ENCODE measurements at regions of chr14 and their contacts with region 1.

Region 1: GRCh38 chr14:54773171-54773975 is 129.3 kb downstream of the GCH1 start:
- DNase-seq: peak; percentile 91
- H3K4me3 ChIP-seq: peak overlapping the region in 1 of 2 experiments; percentile 34; a peak in 1 of 4 replicates
- H3K27ac ChIP-seq: peak overlapping the region; percentile 91 to 97
- H3K4me1 ChIP-seq: peaks cover 17 to 50% of the 10 kb centered on the region in 2 experiments
- H3K27me3 ChIP-seq: no peaks in the 10 kb centered on the region
- CTCF ChIP-seq: peak; percentile 73
- EP300 ChIP-seq: peak; percentile 28 to 93; a peak in 3 of 4 replicates
- RAD21 ChIP-seq: peak; percentile 83

Region 2: DNA sequence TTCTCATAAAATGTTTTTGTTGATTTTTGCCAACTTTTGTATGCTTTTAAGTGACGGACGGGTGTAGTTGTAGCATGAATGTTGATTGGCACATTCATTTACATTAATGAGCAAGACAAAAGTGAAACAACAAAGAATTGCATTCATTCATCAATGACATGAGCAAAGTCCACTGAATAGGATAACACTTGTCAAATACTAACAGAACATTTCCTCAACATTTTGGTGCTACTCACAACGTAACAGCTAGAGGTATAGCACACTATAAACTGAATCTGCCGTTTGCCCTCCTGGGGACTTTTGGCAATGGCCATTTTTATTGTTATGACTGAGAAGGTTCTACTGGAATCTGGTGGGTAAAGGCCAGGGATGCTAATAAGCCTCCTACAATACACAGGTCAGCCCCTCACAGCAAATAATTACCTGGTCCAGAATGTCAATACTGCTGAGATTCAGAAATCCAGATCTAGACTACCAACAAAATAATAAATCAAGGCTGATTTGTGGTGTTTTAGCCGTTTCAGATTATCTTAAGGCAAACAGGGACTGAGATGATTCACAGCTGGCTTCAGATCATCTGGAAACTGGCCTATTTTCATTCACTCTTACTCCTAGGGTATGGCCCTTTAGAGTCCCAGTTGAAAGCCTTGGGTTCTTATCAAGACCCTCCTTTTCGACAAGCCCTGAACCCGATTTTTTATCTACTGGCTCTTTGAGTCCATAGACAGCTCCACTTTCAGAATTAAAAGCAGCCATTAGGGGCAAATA is 399.1 kb before region 1 on chr14:
- CTCF ChIA-PET with region 1: no interaction called
- POLR2A ChIA-PET with region 1: no interaction called
- DNase-seq: no peak
- H3K4me3 ChIP-seq: no peak overlapping the region
- H3K27ac ChIP-seq: no peak overlapping the region
- H3K4me1 ChIP-seq: peaks cover 0 to 4% of the 10 kb centered on the region in 2 experiments; a peak in 1 of 4 replicates
- H3K27me3 ChIP-seq: no peaks in the 10 kb centered on the region; the same call in 1 of the 2 replicates
- CTCF ChIP-seq: no peak
- EP300 ChIP-seq: no peak
- RAD21 ChIP-seq: no peak

Region 3: DNA sequence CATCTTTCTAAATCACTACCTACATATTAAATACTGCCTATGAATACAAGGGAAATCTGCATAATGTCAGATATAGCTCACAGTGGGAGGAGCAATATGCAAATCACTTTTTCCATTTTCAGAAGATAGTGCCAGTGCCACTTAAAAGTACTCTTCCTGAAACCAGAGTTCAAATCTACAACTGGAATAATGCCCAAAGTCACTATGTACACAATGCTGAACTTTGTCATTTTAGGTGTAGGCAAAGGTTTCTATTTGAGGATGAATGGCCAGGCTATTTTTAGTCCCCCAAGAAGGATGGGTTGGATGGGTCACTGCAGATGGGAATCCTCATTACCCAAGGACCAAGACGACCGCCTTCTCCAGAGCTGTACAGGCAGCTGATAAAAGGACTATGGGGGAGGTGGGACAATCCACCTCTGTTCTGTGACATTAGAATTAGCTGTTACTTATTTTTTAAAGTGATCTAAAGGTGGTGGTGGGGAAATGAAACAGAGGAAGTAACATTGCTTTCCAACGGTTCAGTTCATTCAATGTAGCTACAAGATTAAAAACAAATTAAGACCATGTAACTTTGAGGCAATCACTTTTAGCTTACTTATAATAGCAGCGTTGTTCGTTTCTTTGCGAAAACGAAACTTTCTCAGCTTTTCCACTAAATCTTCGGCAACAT is 290.2 kb before region 1 on chr14:
- CTCF ChIA-PET with region 1: interaction called, 12 read pairs
- POLR2A ChIA-PET with region 1: no interaction called
- DNase-seq: no peak
- H3K4me3 ChIP-seq: no peak overlapping the region
- H3K27ac ChIP-seq: no peak overlapping the region; a peak in 1 of 4 replicates
- H3K4me1 ChIP-seq: peaks cover 5 to 32% of the 10 kb centered on the region in 2 experiments; a peak in 3 of 4 replicates
- H3K27me3 ChIP-seq: no peaks in the 10 kb centered on the region
- CTCF ChIP-seq: no peak
- EP300 ChIP-seq: no peak
- RAD21 ChIP-seq: no peak

Region 4: DNA sequence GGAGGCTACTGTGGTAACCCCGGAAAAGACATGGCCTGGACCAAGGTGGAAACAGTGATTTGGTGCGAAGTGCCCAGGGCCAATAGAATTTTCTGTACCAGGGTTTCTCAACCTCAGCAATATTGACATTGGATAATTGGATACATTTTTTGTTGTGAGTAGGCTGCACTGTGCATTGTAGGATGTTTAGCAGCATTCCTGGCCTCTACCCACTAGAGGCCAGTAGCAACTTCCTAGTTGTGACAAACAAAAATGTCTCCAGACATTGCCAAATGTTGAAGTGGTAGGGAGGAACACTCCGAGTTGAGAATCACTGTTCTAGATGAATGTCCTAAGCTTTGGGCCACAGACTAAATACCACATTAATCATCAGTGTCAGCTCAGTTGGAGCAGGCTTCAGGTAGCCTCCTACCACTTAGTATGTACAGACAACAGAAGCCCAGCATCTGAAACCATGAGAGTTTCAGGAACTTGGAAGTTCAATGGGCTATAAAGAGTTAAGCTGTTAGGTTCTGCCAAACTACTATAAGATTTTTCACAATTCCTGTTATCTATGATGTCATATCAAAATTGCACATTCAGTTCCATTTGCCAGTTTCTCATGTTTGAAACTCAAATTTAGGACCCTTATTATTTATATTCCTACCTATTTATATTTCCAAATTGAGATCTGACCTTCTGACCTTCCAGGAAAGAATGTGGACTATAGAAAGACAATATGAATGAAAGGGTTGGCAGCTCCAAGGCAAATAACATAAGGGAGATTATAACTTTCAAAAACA is 269.7 kb before region 1 on chr14:
- CTCF ChIA-PET with region 1: no interaction called
- POLR2A ChIA-PET with region 1: no interaction called
- DNase-seq: no peak
- H3K4me3 ChIP-seq: no peak overlapping the region
- H3K27ac ChIP-seq: no peak overlapping the region
- H3K4me1 ChIP-seq: no peaks in the 10 kb centered on the region; a peak in 1 of 4 replicates
- H3K27me3 ChIP-seq: no peaks in the 10 kb centered on the region
- CTCF ChIP-seq: peak; percentile 55
- EP300 ChIP-seq: no peak
- RAD21 ChIP-seq: peak; percentile 50

Region 5: GRCh38 chr14:54572316-54572715 is 201.1 kb before region 1 on chr14:
- CTCF ChIA-PET with region 1: interaction called, 171 read pairs
- POLR2A ChIA-PET with region 1: no interaction called
- DNase-seq: peak; percentile 34
- H3K4me3 ChIP-seq: 0 out of 4 replicates have a peak overlapping the region, but pooled peaks of 1 of the 2 experiments have one; percentile 17
- H3K27ac ChIP-seq: no peak overlapping the region
- H3K4me1 ChIP-seq: peaks cover 15 to 28% of the 10 kb centered on the region in 2 experiments; a peak in 3 of 4 replicates
- H3K27me3 ChIP-seq: no peaks in the 10 kb centered on the region
- CTCF ChIP-seq: peak; percentile 65
- EP300 ChIP-seq: no peak
- RAD21 ChIP-seq: peak; percentile 54

Region 6: DNA sequence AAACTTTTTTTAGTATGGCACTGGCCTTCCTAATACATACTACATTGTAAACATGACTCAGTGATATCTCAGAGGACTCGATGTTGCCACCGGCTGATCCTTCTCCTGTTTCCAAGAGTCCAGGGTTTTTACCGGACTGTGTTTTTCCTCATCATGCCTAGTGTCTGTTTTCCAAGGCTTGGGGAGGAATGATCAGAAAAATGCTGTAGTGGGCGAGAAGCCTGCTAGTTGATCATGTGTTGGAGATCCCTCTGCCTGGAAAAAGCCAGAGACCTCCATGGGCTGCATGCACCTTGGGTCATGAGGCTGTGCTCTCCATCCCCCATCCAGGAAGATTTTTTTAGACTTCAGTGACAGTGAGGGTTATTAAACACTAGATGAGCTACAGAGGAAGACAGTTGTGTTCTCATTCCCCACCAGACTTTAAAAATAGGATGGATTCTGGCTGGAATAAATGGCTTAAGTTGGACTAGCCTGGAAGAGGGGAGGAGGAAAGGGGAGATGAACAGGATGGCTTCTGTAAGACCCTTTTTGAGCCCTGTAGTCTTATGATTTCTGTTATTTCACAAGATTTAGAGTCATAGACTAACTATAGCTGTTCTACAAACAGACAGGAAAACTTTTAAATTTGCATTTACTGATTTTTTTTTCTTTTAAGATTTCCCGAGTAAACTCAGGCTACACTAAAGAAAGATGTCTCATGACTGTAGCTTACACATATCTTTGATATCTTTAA is 60.7 kb before region 1 on chr14:
- CTCF ChIA-PET with region 1: interaction called, 10 read pairs
- POLR2A ChIA-PET with region 1: no interaction called
- DNase-seq: no peak
- H3K4me3 ChIP-seq: no peak overlapping the region
- H3K27ac ChIP-seq: no peak overlapping the region
- H3K4me1 ChIP-seq: peaks cover 0 to 16% of the 10 kb centered on the region in 2 experiments; a peak in 1 of 4 replicates
- H3K27me3 ChIP-seq: no peaks in the 10 kb centered on the region
- CTCF ChIP-seq: no peak
- EP300 ChIP-seq: no peak
- RAD21 ChIP-seq: no peak

Region 7: GRCh38 chr14:54747616-54748015 is 25.8 kb before region 1 on chr14:
- CTCF ChIA-PET with region 1: interaction called, 12 read pairs
- POLR2A ChIA-PET with region 1: no interaction called
- DNase-seq: no peak
- H3K4me3 ChIP-seq: no peak overlapping the region
- H3K27ac ChIP-seq: no peak overlapping the region
- H3K4me1 ChIP-seq: 0 out of 4 replicates have a peak, but pooled peaks cover 0 to 4% of the 10 kb centered on the region in 2 experiments
- H3K27me3 ChIP-seq: no peaks in the 10 kb centered on the region
- CTCF ChIP-seq: no peak
- EP300 ChIP-seq: no peak
- RAD21 ChIP-seq: no peak

Region 8: DNA sequence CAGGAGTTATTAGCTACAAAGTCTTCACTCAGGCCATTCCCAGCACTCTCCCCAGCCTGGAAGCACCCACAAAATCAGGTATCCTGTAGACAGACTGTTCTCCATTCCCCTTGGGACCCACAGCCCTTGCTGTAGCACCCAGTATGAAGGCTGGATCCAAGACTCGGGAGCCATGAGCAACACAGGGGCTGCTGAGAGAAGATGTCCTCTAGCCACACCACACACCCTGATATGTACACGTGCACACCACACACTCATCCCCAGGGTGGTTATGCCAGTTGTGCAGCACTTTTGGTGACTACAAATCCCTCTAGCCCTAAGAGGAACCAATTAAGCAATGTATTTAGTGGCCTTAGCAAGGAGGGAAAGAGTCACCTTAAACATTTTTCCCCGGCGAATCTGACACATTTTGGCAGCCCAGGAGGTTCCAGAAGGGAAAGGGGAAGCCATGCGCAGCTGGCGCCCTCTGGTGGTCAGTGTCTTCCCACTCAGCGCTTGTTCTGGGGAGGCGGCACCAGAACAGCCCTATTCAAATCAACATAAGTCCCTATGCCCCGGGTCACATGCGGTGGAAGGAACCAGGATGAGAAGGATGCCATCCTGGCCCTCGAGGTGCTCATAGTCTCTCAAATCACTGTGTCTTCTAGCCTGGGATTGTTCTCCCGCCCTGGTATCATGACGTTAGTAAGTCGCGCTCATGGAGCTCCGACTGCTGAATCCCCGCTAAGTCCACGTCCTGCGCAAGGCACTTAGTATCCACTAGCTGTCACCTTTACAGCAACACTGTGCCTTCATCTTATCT is 32.3 kb after region 1 on chr14:
- CTCF ChIA-PET with region 1: interaction called, 56 read pairs
- POLR2A ChIA-PET with region 1: no interaction called
- DNase-seq: peak; percentile 80
- H3K4me3 ChIP-seq: peak overlapping the region in 1 of 2 experiments; percentile 45; a peak in 1 of 4 replicates
- H3K27ac ChIP-seq: peak overlapping the region in 1 of 2 experiments; percentile 29; a peak in 1 of 4 replicates
- H3K4me1 ChIP-seq: peaks cover 0 to 57% of the 10 kb centered on the region in 2 experiments; a peak in 2 of 4 replicates
- H3K27me3 ChIP-seq: no peaks in the 10 kb centered on the region
- CTCF ChIP-seq: peak; percentile 90
- EP300 ChIP-seq: no peak
- RAD21 ChIP-seq: peak; percentile 85

Region 9: GRCh38 chr14:54839701-54840119 is 66.3 kb after region 1 on chr14:
- CTCF ChIA-PET with region 1: no interaction called
- POLR2A ChIA-PET with region 1: no interaction called
- DNase-seq: no peak
- H3K4me3 ChIP-seq: no peak overlapping the region
- H3K27ac ChIP-seq: peak overlapping the region in 1 of 2 experiments; percentile 60; a peak in 1 of 4 replicates
- H3K4me1 ChIP-seq: peaks cover 0 to 7% of the 10 kb centered on the region in 2 experiments; a peak in 2 of 4 replicates
- H3K27me3 ChIP-seq: no peaks in the 10 kb centered on the region
- CTCF ChIP-seq: no peak
- EP300 ChIP-seq: no peak
- RAD21 ChIP-seq: no peak

Region 10: DNA sequence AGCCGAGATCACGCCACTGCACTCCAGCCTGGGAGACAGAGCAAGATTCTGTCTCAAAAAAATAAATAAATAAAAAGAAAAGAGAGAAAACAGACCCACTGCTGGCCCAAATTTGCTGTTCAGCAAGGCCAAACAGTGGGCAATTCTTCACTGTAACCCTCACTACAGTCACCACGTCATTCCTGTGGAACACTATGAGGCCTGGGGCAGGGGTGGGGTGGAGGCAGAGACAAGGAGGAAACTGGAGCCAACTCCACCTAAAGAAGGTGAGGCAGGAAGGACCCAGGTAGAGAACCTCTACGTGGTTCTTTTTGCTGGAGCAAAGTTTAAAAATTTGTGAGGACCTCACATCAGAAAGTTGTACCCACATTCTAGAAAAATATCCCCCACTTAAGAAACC is 110.3 kb after region 1 on chr14:
- CTCF ChIA-PET with region 1: no interaction called
- POLR2A ChIA-PET with region 1: no interaction called
- DNase-seq: no peak
- H3K4me3 ChIP-seq: no peak overlapping the region
- H3K27ac ChIP-seq: peak overlapping the region in 1 of 2 experiments; percentile 35; a peak in 2 of 4 replicates
- H3K4me1 ChIP-seq: peaks cover 0 to 45% of the 10 kb centered on the region in 2 experiments; a peak in 3 of 4 replicates
- H3K27me3 ChIP-seq: no peaks in the 10 kb centered on the region
- CTCF ChIP-seq: no peak
- EP300 ChIP-seq: no peak
- RAD21 ChIP-seq: no peak